Activated CD4-positive, alpha-beta memory T cell treated with anti-CD3 and anti-CD28 coated beads, Interleukin-2, amount 10 ng/mL, durations not matched to agents 7 days and 5 days (primary cell): ENCODE measurements at regions of chr22 and their contacts with region 1.

Region 1: DNA sequence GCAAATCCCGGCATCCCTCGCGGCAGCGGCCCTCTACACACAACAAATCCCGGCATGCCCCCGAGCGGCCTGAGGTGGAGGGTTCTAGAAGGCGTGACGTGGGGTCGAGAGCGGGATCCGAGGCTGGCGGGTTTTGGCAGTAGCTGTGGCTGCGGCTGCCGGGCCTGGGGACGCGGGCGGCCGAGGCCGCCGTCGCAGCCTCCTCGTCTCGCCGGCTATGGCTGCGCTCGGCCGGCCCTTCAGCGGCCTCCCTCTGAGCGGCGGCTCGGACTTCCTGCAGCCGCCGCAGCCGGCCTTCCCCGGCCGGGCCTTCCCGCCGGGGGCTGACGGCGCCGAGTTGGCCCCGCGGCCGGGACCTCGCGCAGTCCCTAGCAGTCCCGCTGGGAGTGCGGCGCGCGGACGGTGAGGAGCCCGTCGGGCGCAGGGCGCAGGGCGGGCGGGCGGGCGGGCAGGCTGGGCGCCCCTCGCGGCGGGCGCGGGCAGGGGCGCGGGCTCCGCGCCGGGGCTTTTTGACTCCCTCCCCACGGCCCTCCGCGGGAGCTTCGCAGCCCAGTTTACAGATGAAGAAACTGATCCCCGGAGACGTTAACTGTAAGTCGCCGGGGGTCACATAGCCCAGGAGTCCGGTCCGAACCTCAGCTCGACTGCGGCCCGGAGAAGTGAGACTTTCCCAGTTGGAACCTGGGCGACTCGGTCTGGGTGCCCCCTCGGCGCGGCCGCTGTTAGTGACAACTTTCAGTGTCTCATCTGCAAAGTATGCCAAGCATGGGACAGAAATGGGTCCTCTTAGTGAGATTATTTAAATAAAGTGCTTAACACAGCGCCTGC is at the start of gene CCDC117:
- DNase-seq: peak; percentile 95
- H3K4me3 Mint-ChIP-seq: peak within 1 kb of the TSS; percentile 96
- H3K27ac Mint-ChIP-seq: peak within 1 kb of the TSS; percentile 97
- H3K4me1 Mint-ChIP-seq: peaks cover 24% of the 10 kb centered on the region
- H3K27me3 Mint-ChIP-seq: peaks cover 3% of the 10 kb centered on the region
- total RNA-seq, gene CCDC117: 33.6 to 35.2 TPM

Region 2: DNA sequence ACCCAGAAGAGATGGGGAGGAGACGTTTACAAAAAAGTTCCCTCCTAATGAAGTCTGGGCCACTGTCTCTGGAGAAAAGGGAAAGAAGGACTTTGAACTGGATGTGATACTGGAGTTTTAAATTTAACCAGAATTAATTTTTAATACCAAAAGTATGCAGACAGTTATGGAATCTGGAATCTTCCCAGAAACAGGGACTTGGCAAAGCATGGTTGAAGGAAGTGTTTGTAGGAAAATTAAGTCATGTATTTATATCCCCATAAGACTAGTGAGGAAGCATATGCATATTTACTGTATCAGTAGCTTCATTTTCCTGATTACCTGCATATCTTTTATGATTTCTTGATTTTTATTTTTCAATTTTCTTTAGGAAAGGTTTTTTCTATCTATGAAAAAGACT is 308.7 kb before region 1 on chr22:
- CTCF ChIA-PET with region 1: no interaction called
- POLR2A ChIA-PET with region 1: no interaction called
- DNase-seq: no peak
- H3K4me3 Mint-ChIP-seq: no peak overlapping the region
- H3K27ac Mint-ChIP-seq: no peak overlapping the region
- H3K4me1 Mint-ChIP-seq: no peaks in the 10 kb centered on the region
- H3K27me3 Mint-ChIP-seq: peaks cover 3% of the 10 kb centered on the region

Region 3: GRCh38 chr22:28741758-28742561 is 30.9 kb before region 1 on chr22 and contains the starts of genes CHEK2 and HSCB:
- CTCF ChIA-PET with region 1: interaction called, 3 read pairs
- POLR2A ChIA-PET with region 1: interaction called, 15 read pairs
- DNase-seq: peak; percentile 98
- H3K4me3 Mint-ChIP-seq: peak within 1 kb of the TSS; percentile 94
- H3K27ac Mint-ChIP-seq: peak within 1 kb of the TSS; percentile 89
- H3K4me1 Mint-ChIP-seq: peaks cover 51% of the 10 kb centered on the region
- H3K27me3 Mint-ChIP-seq: no peaks in the 10 kb centered on the region
- total RNA-seq, gene CHEK2: 38.7 to 39.8 TPM
- total RNA-seq, gene HSCB: 14.4 to 16.1 TPM

Region 4: DNA sequence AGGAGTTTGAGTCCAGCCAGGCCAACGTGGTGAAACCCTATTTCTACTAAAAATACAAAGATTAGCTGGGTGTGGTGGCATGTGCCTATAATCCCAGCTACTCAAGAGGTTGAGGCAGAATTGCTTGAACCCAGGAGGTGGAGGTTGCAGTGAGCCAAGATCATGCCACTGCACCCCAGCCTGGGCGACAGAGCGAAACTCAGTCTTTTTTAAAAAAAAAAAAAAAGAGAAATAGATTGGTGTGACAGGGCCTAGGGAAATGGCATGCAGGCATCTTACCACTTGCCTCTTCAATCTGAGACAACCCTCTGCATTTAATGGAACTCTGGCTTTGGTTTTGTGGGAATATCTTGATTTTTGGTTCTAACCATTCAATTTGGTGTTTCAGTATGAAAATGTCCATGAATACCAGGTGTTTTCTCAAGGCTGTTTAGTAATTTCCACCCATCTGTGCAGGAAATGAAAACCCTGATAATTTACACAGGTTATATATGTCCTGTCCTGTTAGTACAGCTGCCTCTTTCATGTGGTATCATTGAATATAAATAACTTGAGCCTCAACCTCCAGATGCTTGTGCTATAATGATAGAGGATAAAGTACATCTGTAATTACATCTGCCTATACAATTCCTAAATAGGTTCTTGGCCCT is 19.1 kb after region 1 on chr22:
- CTCF ChIA-PET with region 1: interaction called, 6 read pairs
- POLR2A ChIA-PET with region 1: interaction called, 93 read pairs
- DNase-seq: no peak
- H3K4me3 Mint-ChIP-seq: no peak overlapping the region
- H3K27ac Mint-ChIP-seq: peak overlapping the region; percentile 58
- H3K4me1 Mint-ChIP-seq: peaks cover 63% of the 10 kb centered on the region
- H3K27me3 Mint-ChIP-seq: no peaks in the 10 kb centered on the region

Region 5: GRCh38 chr22:28810821-28811491 is 38.1 kb after region 1 on chr22:
- CTCF ChIA-PET with region 1: interaction called, 4 read pairs
- POLR2A ChIA-PET with region 1: interaction called, 13 read pairs
- DNase-seq: peak; percentile 75
- H3K4me3 Mint-ChIP-seq: peak overlapping the region; percentile 77
- H3K27ac Mint-ChIP-seq: peak overlapping the region; percentile 99
- H3K4me1 Mint-ChIP-seq: peaks cover 81% of the 10 kb centered on the region
- H3K27me3 Mint-ChIP-seq: no peaks in the 10 kb centered on the region

Region 6: DNA sequence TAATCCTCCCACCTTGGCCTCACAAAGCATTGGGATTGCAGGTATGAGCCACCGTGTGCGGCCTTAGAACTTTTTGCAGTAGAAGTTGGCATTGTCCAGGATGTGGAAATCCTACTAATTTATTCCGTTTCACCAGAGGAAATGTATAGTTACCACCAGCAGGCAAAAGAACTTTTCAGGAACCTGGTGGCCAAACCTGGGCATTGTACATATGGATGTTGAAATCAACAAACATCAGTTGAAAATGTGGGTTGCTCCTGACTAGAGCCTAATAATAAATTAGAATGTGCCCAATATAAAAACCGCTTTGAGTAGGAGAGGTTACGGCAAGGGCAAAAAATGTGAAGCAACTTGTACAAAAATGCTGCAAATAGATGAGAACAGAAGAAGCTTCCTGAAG is 68.3 kb after region 1 on chr22:
- CTCF ChIA-PET with region 1: no interaction called
- POLR2A ChIA-PET with region 1: no interaction called
- DNase-seq: no peak
- H3K4me3 Mint-ChIP-seq: no peak overlapping the region
- H3K27ac Mint-ChIP-seq: no peak overlapping the region
- H3K4me1 Mint-ChIP-seq: no peaks in the 10 kb centered on the region
- H3K27me3 Mint-ChIP-seq: no peaks in the 10 kb centered on the region

Region 7: GRCh38 chr22:28943501-28943879 is 170.6 kb after region 1 on chr22:
- CTCF ChIA-PET with region 1: no interaction called
- POLR2A ChIA-PET with region 1: no interaction called
- DNase-seq: no peak
- H3K4me3 Mint-ChIP-seq: no peak overlapping the region
- H3K27ac Mint-ChIP-seq: no peak overlapping the region
- H3K4me1 Mint-ChIP-seq: no peaks in the 10 kb centered on the region
- H3K27me3 Mint-ChIP-seq: peaks cover 67% of the 10 kb centered on the region